CD4-positive, alpha-beta memory T cell (primary cell): ENCODE measurements at regions of chr16 and their contacts with region 1.

Region 1: DNA sequence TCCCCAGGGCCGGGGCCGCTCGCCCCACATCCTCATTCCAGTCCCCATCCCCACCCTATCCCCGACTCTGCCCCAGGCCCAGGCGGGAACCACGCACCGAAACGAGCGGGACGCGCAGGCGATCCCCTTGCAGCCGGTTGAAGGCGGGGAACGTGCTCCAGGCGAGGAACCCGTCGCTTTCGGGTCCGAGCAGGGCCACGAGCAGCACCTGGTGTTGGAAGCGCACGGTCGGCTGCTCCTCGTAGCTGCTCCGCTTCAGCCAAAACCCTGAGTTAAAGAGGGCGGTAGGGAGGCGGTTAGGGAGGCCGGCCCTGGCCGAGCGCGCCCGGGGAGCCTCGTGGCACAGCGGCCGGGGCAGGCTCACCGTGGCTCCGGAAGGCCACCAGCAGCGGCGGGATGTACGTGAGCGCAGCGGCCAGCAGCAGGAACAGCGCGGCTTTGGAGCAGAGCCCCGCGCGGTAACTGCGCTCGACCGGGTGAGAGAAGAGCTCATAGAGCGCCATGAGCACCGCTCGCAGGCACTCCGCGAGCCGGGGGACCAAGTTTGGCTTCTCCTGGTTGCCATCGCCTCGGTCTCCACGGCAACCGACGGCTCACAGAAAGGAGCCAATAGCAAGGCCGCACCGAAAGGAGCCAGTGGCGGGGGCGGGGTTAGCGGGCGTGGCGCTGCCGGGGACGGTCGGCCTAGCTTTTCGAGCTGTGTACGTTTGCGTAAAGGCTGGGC is at the start of gene TMEM231:
- DNase-seq: peak; percentile 94 to 98 (median 96)
- H3K4me3 ChIP-seq: peak within 1 kb of the TSS; percentile 75 to 76
- H3K4me3 Mint-ChIP-seq: peak within 1 kb of the TSS; percentile 87 to 95 (median 90)
- H3K27ac ChIP-seq: peak within 1 kb of the TSS; percentile 68
- H3K27ac Mint-ChIP-seq: peak within 1 kb of the TSS; percentile 89 to 98 (median 95)
- H3K4me1 ChIP-seq: peaks cover 15% of the 10 kb centered on the region
- H3K4me1 Mint-ChIP-seq: peaks cover 3 to 16% (median 10%) of the 10 kb centered on the region in 4 donors
- H3K27me3 ChIP-seq: no peaks in the 10 kb centered on the region
- H3K27me3 Mint-ChIP-seq: peaks cover 0 to 1% of the 10 kb centered on the region in 2 donors
- total RNA-seq, gene TMEM231: 2.4 to 2.6 TPM

Region 2: GRCh38 chr16:75148311-75149195 is 407.3 kb before region 1 on chr16 and contains the start of gene ZFP1:
- CTCF ChIA-PET with region 1: no interaction called
- POLR2A ChIA-PET with region 1: no interaction called
- intact Hi-C with region 1: loop called (anchors 1 kb)
- DNase-seq: peak; percentile 92 to 96 (median 93)
- H3K4me3 ChIP-seq: peak within 1 kb of the TSS; percentile 44 to 95
- H3K4me3 Mint-ChIP-seq: peak within 1 kb of the TSS; percentile 82 to 91 (median 88)
- H3K27ac ChIP-seq: peak within 1 kb of the TSS; percentile 75
- H3K27ac Mint-ChIP-seq: peak within 1 kb of the TSS; percentile 75 to 93 (median 91)
- H3K4me1 ChIP-seq: peaks cover 5% of the 10 kb centered on the region
- H3K4me1 Mint-ChIP-seq: peaks cover 8 to 23% (median 13%) of the 10 kb centered on the region in 4 donors
- H3K27me3 ChIP-seq: no peaks in the 10 kb centered on the region
- H3K27me3 Mint-ChIP-seq: no peaks in the 10 kb centered on the region
- total RNA-seq, gene ZFP1: 11.7 to 13.4 TPM

Region 3: GRCh38 chr16:75534560-75535205 is 21.2 kb before region 1 on chr16:
- CTCF ChIA-PET with region 1: no interaction called
- POLR2A ChIA-PET with region 1: no interaction called
- intact Hi-C with region 1: no loop called
- DNase-seq: no peak
- H3K4me3 ChIP-seq: no peak overlapping the region
- H3K4me3 Mint-ChIP-seq: no peak overlapping the region
- H3K27ac ChIP-seq: no peak overlapping the region
- H3K27ac Mint-ChIP-seq: no peak overlapping the region
- H3K4me1 ChIP-seq: no peaks in the 10 kb centered on the region
- H3K4me1 Mint-ChIP-seq: no peaks in the 10 kb centered on the region
- H3K27me3 ChIP-seq: no peaks in the 10 kb centered on the region
- H3K27me3 Mint-ChIP-seq: no peaks in the 10 kb centered on the region

Region 4: DNA sequence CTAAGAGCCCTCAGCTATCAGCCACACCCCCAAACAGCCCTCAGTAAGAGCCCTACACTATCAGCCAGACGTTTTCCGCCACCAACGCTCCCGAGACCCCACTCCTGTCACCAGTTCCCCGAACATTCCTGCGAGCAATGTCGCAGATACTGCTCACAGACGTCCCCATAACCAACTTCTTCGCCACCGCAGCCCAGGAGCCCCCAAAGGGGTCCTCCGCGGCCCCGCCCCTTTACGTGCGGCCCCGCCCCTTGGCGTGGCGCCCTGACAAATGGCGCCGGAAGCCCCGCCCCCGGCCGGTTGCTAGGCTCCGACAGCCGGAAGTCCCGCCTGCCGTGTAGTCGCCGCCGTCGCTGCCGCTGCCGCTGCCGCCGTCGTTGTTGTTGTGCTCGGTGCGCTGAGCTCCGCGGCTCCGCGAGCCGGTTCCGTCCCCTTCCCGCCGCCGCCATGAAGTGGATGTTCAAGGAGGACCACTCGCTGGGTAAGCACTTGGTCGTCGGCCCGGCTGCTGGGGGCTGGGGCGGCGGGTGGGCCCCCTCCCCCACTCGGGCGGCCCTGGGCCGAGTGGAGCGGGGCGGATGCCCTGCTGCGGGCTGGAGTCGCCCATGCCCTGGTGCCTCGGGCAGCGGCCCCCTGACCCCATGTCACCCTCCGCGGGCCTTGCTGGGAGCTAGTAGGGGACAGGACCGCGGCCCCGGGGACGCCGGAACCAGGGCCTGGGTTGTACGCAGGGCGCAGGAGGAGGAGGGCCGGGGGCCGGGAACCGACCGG is 10.4 kb after region 1 on chr16 and contains the start of gene GABARAPL2:
- CTCF ChIA-PET with region 1: interaction called, 10 read pairs
- POLR2A ChIA-PET with region 1: interaction called, 38 read pairs
- intact Hi-C with region 1: loop called (anchors 1 kb)
- DNase-seq: peak; percentile 87 to 95 (median 91)
- H3K4me3 ChIP-seq: peak within 1 kb of the TSS; percentile 68 to 100
- H3K4me3 Mint-ChIP-seq: peak within 1 kb of the TSS; percentile 89 to 100 (median 97)
- H3K27ac ChIP-seq: peak within 1 kb of the TSS; percentile 82
- H3K27ac Mint-ChIP-seq: peak within 1 kb of the TSS; percentile 84 to 100 (median 97)
- H3K4me1 ChIP-seq: peaks cover 48% of the 10 kb centered on the region
- H3K4me1 Mint-ChIP-seq: peaks cover 26 to 57% (median 38%) of the 10 kb centered on the region in 4 donors
- H3K27me3 ChIP-seq: no peaks in the 10 kb centered on the region
- H3K27me3 Mint-ChIP-seq: peaks cover 0 to 7% of the 10 kb centered on the region in 2 donors
- total RNA-seq, gene GABARAPL2: 91.9 to 100 TPM

Region 5: DNA sequence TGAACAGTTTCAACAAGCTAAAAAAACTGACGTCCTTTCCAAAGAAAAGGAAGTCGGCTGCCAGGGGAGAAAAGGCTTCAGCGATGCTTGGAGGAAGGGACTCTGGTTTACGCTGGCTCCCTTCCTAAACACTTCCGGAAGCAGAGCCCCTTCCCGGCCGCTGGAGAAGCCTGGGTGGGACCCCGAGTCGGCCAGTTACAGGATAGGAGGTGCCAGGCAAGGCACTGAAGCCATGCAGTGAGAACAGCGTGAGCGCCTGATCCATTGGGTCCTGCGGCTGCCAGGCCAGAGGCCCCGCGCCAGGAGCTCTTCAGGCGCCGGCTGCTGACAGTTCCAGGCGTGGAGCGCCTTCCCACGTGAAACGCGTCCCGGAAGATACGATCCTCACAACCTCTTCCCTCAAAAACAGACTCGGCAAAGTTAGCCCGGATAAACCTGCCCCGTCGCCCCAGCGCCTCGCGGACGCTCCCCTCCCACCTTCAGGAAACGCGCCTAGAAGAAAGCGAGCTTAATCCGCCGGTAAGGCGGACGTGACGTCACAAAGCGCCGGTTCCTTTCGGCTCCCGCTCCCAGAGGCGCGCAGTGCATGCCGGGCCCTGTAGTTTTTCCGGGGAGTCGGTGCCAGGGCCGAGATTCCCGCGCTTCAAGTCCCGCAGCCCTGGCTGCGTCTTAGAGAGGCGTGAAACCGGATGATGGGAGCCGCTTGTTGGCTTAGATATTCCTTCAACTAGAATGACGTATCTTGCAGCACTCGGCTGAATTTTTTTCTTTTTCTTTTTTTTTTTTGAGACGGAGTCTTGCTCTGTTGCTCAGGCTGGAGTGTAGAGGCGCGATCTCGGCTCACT is 67.1 kb after region 1 on chr16 and contains the start of gene ADAT1:
- CTCF ChIA-PET with region 1: interaction called, 5 read pairs
- POLR2A ChIA-PET with region 1: interaction called, 7 read pairs
- intact Hi-C with region 1: loop called (anchors 1 kb)
- DNase-seq: peak; percentile 95 to 99 (median 98)
- H3K4me3 ChIP-seq: peak within 1 kb of the TSS; percentile 86 to 90
- H3K4me3 Mint-ChIP-seq: peak within 1 kb of the TSS; percentile 90 to 98 (median 97)
- H3K27ac ChIP-seq: peak within 1 kb of the TSS; percentile 96
- H3K27ac Mint-ChIP-seq: peak within 1 kb of the TSS; percentile 97 to 99 (median 98)
- H3K4me1 ChIP-seq: peaks cover 59% of the 10 kb centered on the region
- H3K4me1 Mint-ChIP-seq: peaks cover 46 to 87% (median 58%) of the 10 kb centered on the region in 4 donors
- H3K27me3 ChIP-seq: no peaks in the 10 kb centered on the region
- H3K27me3 Mint-ChIP-seq: peaks cover 0 to 3% of the 10 kb centered on the region in 2 donors
- total RNA-seq, gene ADAT1: 88.3 to 93.9 TPM

Region 6: GRCh38 chr16:75836347-75837010 is 280.6 kb after region 1 on chr16:
- CTCF ChIA-PET with region 1: no interaction called
- POLR2A ChIA-PET with region 1: no interaction called
- intact Hi-C with region 1: no loop called
- DNase-seq: no peak
- H3K4me3 ChIP-seq: no peak overlapping the region
- H3K4me3 Mint-ChIP-seq: no peak overlapping the region
- H3K27ac ChIP-seq: no peak overlapping the region
- H3K27ac Mint-ChIP-seq: no peak overlapping the region
- H3K4me1 ChIP-seq: no peaks in the 10 kb centered on the region
- H3K4me1 Mint-ChIP-seq: no peaks in the 10 kb centered on the region
- H3K27me3 ChIP-seq: no peaks in the 10 kb centered on the region
- H3K27me3 Mint-ChIP-seq: peaks cover 19 to 24% of the 10 kb centered on the region in 2 donors